ENCODE measurements at regions of chr3 and their contacts with region 1.

Region 1: DNA sequence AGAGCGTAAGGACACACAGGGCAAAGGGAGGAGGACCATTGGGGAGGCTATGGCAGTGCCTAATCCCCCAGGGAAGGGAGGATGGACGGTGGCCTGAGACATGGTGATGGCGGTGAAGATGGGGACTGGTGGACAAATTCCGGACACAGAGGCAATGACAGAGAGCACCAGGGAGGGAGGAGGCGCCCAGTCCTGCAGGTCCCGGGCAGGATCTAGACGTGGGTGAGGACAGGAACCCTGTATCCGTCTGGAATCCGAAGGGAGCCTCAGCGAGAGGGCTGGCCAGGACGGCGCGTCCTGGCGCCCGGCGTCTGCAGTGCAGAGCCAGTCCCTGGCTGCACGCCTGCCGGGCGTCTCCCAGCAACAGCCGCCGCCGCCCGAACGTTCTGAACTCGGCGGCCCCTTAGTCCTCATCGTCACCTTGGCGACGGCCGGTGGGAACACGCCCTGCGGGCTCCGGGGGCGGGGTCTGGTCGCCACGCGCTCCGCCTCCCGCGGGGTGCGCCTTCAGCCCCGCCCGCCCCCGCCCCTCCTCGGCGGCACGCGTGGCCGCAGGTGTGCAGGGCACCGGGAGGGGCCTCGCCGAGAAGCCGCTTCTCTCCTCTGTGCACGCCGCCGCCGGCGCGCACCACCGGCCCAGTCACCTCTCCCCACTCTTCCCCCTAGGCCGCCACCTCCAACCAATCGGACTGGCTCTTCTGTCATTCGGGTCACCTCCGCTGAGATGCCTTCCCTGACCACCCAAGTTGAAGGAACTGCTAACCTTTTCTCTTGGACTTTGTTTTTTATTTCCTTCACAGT is 11.6 kb downstream of the XIRP1 start:
- DNase-seq: peak; percentile 94 to 97
- ATAC-seq: peak; percentile 91
- H3K4me3 ChIP-seq: no peak overlapping the region
- H3K27ac ChIP-seq: peak overlapping the region in 1 of 2 donors; percentile 78
- H3K4me1 ChIP-seq: peaks cover 0 to 7% of the 10 kb centered on the region in 2 donors
- H3K27me3 ChIP-seq: no peaks in the 10 kb centered on the region

Region 2: DNA sequence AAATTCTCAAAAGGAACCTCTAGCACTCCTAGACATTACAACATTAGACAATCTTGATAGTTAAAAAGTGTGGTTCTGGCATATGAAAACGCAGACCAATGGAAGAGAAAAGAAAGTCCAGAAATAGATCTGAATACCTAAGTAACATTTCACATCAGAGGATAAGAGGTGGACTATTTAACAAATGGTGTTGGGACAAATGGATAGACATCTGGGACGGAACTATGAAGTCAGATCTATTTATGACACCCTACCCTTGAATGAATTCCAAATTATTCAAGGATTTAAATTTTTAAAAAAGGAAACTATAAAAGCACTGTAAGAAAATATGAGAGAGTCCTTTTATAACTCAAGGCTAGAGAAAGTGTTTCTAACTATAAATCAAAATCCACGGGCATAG is 240.4 kb before region 1 on chr3:
- intact Hi-C with region 1: no loop called
- DNase-seq: no peak
- ATAC-seq: no peak
- H3K4me3 ChIP-seq: no peak overlapping the region
- H3K27ac ChIP-seq: no peak overlapping the region
- H3K4me1 ChIP-seq: no peaks in the 10 kb centered on the region
- H3K27me3 ChIP-seq: no peaks in the 10 kb centered on the region

Region 3: GRCh38 chr3:39107388-39108199 is 73.2 kb before region 1 on chr3 and contains the starts of genes GORASP1 and TTC21A:
- intact Hi-C with region 1: loop called in 1 of 2 experiments (anchors 5 kb)
- DNase-seq: peak; percentile 95 to 96
- ATAC-seq: peak; percentile 95
- H3K4me3 ChIP-seq: peak within 1 kb of the TSS; percentile 71 to 86
- H3K27ac ChIP-seq: peak within 1 kb of the TSS; percentile 50 to 51
- H3K4me1 ChIP-seq: no peaks in the 10 kb centered on the region
- H3K27me3 ChIP-seq: no peaks in the 10 kb centered on the region
- total RNA-seq, gene GORASP1: 52.3 to 62.2 TPM
- total RNA-seq, gene TTC21A: 3.6 to 11.6 TPM

Region 4: GRCh38 chr3:39138804-39139415 is 41.8 kb before region 1 on chr3:
- intact Hi-C with region 1: loop called in 1 of 2 experiments (anchors 10 kb)
- DNase-seq: no peak
- ATAC-seq: no peak
- H3K4me3 ChIP-seq: no peak overlapping the region
- H3K27ac ChIP-seq: no peak overlapping the region
- H3K4me1 ChIP-seq: no peaks in the 10 kb centered on the region
- H3K27me3 ChIP-seq: no peaks in the 10 kb centered on the region

Region 5: DNA sequence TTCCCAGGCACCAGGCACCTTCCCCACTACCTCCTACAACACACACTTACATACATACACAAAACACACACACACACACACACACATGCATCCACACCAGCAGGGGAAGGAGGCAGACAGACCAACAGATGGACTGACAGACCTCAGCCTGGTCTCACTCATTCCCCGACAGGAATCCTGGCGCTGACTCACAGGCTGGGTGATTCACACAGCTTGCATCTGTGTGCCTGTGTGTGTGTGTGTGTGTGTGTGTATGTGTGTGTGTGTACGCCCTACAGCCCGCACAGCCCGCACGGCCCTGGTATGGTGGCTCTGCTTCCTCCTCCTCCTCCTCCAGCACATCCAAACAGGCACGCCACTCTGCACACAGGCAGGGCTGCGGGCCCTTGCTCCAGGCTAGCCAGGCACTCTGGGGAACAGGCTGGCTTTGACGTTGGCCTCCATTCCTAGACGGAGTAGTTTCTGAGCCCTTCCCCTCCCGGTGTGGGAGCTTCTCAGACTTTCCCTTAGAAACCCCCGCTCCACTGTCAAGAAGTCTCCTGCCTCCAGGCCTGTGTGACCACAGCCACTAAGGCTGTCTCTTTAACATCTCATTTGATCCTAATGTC is 33.7 kb before region 1 on chr3:
- intact Hi-C with region 1: loop called in 1 of 2 experiments (anchors 1 kb)
- DNase-seq: peak; percentile 93 to 94
- ATAC-seq: peak; percentile 75
- H3K4me3 ChIP-seq: no peak overlapping the region
- H3K27ac ChIP-seq: peak overlapping the region; percentile 23 to 71
- H3K4me1 ChIP-seq: peaks cover 10% of the 10 kb centered on the region in 2 donors
- H3K27me3 ChIP-seq: no peaks in the 10 kb centered on the region

Region 6: GRCh38 chr3:39208463-39209055 is 27.8 kb after region 1 on chr3:
- intact Hi-C with region 1: no loop called
- DNase-seq: peak; percentile 45 to 74
- ATAC-seq: peak; percentile 79
- H3K4me3 ChIP-seq: no peak overlapping the region
- H3K27ac ChIP-seq: no peak overlapping the region
- H3K4me1 ChIP-seq: no peaks in the 10 kb centered on the region
- H3K27me3 ChIP-seq: no peaks in the 10 kb centered on the region

Region 7: DNA sequence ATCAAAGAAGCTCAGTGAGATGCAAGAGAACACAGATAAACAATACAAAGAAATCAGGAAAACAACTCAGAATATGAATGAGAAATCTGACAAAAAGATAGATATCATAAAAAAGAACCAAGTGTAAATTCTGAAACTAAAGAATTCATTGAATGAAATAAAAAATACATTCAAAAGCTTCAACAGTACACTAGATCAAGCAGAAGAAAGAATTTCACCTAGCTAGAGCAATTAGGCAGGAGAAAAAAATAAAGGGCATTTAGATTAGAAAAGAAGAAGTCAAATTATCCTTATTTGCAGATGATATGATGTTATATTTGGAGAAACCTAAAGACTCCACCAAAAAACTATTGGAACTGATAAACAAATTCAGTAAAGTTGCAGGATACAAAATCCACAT is 118.5 kb after region 1 on chr3:
- intact Hi-C with region 1: no loop called
- DNase-seq: no peak
- ATAC-seq: no peak
- H3K4me3 ChIP-seq: no peak overlapping the region
- H3K27ac ChIP-seq: no peak overlapping the region
- H3K4me1 ChIP-seq: no peaks in the 10 kb centered on the region
- H3K27me3 ChIP-seq: no peaks in the 10 kb centered on the region

Region 8: GRCh38 chr3:39383045-39383880 is 202.5 kb after region 1 on chr3 and contains the start of gene SLC25A38:
- intact Hi-C with region 1: loop called in 1 of 2 experiments (anchors 10 kb)
- DNase-seq: peak; percentile 89 to 90
- ATAC-seq: peak; percentile 93
- H3K4me3 ChIP-seq: peak within 1 kb of the TSS; percentile 29 to 85
- H3K27ac ChIP-seq: peak within 1 kb of the TSS; percentile 84 to 95
- H3K4me1 ChIP-seq: peaks cover 0 to 3% of the 10 kb centered on the region in 2 donors
- H3K27me3 ChIP-seq: no peaks in the 10 kb centered on the region
- total RNA-seq, gene SLC25A38: 18.0 to 18.6 TPM

Region 9: GRCh38 chr3:39414421-39414907 is 233.7 kb after region 1 on chr3:
- intact Hi-C with region 1: no loop called
- DNase-seq: no peak
- ATAC-seq: no peak
- H3K4me3 ChIP-seq: no peak overlapping the region
- H3K27ac ChIP-seq: no peak overlapping the region
- H3K4me1 ChIP-seq: no peaks in the 10 kb centered on the region
- H3K27me3 ChIP-seq: no peaks in the 10 kb centered on the region

Measured in aorta (tissue), 5 donors.